ENCODE measurements at regions of chr7 and their contacts with region 1.

Region 1: DNA sequence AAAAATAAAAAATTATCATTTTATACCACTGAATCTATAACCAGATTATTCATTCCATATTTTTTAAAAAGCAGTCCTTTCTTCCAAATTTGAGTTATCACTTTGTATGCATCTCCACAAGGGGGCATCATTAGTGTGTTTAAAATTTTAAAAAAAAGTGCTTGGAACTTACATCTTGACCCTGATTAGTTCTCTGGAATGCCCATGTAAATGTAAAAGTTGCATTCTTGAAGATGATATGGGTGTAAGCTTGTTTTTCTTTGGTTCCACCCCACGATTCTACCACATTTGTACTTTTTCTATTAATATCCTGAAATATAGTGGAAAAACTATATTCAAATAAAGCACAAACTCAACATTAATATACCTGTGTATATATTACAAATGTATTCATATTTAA is 144.9 kb downstream of the ELAPOR2 start:
- DNase-seq: no peak
- ATAC-seq: no peak
- H3K4me3 ChIP-seq: no peak overlapping the region
- H3K27ac ChIP-seq: no peak overlapping the region
- H3K4me1 ChIP-seq: no peaks in the 10 kb centered on the region
- H3K27me3 ChIP-seq: no peaks in the 10 kb centered on the region
- CTCF ChIP-seq: peak in 2 of 3 experiments; percentile 22 to 42; a peak in 4 of 6 replicates
- EP300 ChIP-seq: no peak
- POLR2A ChIP-seq: no peak
- RAD21 ChIP-seq: peak; percentile 42

Region 2: GRCh38 chr7:86851555-86851954 is 63.0 kb before region 1 on chr7:
- CTCF ChIA-PET with region 1: no interaction called
- POLR2A ChIA-PET with region 1: no interaction called
- RAD21 ChIA-PET with region 1: no interaction called
- SMC1A ChIA-PET with region 1: no interaction called
- in situ Hi-C with region 1: no loop called
- intact Hi-C with region 1: loop called (anchors 10 kb)
- DNase-seq: no peak
- ATAC-seq: no peak
- H3K4me3 ChIP-seq: no peak overlapping the region
- H3K27ac ChIP-seq: no peak overlapping the region
- H3K4me1 ChIP-seq: no peaks in the 10 kb centered on the region
- H3K27me3 ChIP-seq: no peaks in the 10 kb centered on the region
- CTCF ChIP-seq: no peak
- EP300 ChIP-seq: no peak
- POLR2A ChIP-seq: no peak
- RAD21 ChIP-seq: no peak

Region 3: GRCh38 chr7:86926732-86927131 is 12.2 kb after region 1 on chr7:
- CTCF ChIA-PET with region 1: interaction called, 15 read pairs
- POLR2A ChIA-PET with region 1: no interaction called
- RAD21 ChIA-PET with region 1: interaction called, 4 read pairs
- SMC1A ChIA-PET with region 1: interaction called, 4 read pairs
- in situ Hi-C with region 1: no loop called
- intact Hi-C with region 1: no loop called
- DNase-seq: no peak
- ATAC-seq: peak; percentile 80
- H3K4me3 ChIP-seq: no peak overlapping the region
- H3K27ac ChIP-seq: no peak overlapping the region
- H3K4me1 ChIP-seq: peaks cover 10% of the 10 kb centered on the region
- H3K27me3 ChIP-seq: no peaks in the 10 kb centered on the region
- CTCF ChIP-seq: peak; percentile 67 to 72 (median 70)
- EP300 ChIP-seq: no peak
- POLR2A ChIP-seq: no peak
- RAD21 ChIP-seq: peak; percentile 84